ENCODE measurements at regions of chr12 and their contacts with region 1.

Region 1: GRCh38 chr12:26274441-26275312 is 79.3 kb downstream of the SSPN start:
- DNase-seq: peak; percentile 100
- ATAC-seq: peak; percentile 95
- H3K4me3 ChIP-seq: peak overlapping the region in 1 of 2 experiments; percentile 11; a peak in 2 of 4 replicates
- H3K27ac ChIP-seq: peak overlapping the region; percentile 98
- H3K4me1 ChIP-seq: peaks cover 61% of the 10 kb centered on the region
- H3K27me3 ChIP-seq: no peaks in the 10 kb centered on the region
- CTCF ChIP-seq: no peak; the same call in 1 of the 2 replicates

Region 2: DNA sequence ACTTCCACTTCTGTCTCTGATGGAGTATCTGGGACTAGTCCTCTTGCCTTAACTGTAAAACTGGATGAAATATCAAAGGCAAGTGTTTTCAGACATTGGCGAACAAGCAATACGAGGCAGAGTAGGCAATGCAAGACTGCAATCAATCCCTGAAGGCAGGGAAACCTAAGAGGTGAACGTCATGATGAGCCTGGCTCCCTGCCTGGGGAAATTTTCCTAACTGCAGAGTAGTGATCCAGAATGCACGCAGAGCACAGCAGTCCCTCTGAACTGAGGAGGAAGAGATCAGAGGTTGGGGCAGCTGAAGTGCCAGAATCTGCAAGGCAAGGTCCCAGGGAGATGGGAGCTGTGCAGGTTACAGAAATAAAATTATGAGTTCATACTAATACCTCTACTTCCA is 168.3 kb before region 1 on chr12:
- CTCF ChIA-PET with region 1: no interaction called
- POLR2A ChIA-PET with region 1: interaction called, 13 read pairs
- in situ Hi-C with region 1: no loop called
- intact Hi-C with region 1: no loop called
- DNase-seq: no peak
- ATAC-seq: peak; percentile 66
- H3K4me3 ChIP-seq: no peak overlapping the region
- H3K27ac ChIP-seq: peak overlapping the region; percentile 100
- H3K4me1 ChIP-seq: peaks cover 38% of the 10 kb centered on the region
- H3K27me3 ChIP-seq: no peaks in the 10 kb centered on the region
- CTCF ChIP-seq: no peak

Region 3: DNA sequence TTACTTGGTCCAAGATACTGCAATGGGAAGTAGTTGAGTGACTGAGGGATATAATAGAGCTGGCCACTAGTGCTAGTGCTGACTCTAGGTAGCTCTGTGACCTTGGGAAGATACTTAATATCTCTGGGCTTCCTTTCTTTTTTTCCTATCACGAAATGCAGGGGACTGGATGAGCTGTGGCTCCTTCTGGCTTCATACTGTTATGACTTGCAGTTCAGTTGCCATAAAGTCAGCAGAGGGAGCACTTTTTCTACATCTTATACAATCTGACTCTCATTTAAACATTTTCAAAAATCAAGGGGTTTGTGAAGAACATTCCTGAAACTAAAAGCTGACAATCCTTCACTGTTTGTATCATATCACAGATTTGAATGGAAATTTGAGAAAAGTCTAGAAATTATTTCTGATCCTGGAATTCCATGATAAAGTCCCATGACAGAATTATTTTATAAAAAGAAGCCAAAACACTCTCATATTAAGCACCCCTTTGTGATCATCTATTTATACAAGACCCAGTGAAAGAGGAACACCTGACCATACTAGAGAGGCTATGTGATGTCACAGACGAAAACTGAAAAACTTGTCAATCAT is 155.2 kb before region 1 on chr12:
- CTCF ChIA-PET with region 1: interaction called, 19 read pairs
- POLR2A ChIA-PET with region 1: interaction called, 17 read pairs
- in situ Hi-C with region 1: no loop called
- intact Hi-C with region 1: no loop called
- DNase-seq: no peak
- ATAC-seq: peak; percentile 36
- H3K4me3 ChIP-seq: no peak overlapping the region
- H3K27ac ChIP-seq: peak overlapping the region; percentile 100
- H3K4me1 ChIP-seq: peaks cover 77% of the 10 kb centered on the region
- H3K27me3 ChIP-seq: no peaks in the 10 kb centered on the region
- CTCF ChIP-seq: peak; percentile 89

Region 4: GRCh38 chr12:26125400-26126339 is 149.0 kb before region 1 on chr12:
- CTCF ChIA-PET with region 1: interaction called, 12 read pairs
- POLR2A ChIA-PET with region 1: interaction called, 17 read pairs
- in situ Hi-C with region 1: no loop called
- intact Hi-C with region 1: loop called (anchors 1 kb)
- DNase-seq: peak; percentile 94
- ATAC-seq: peak; percentile 80
- H3K4me3 ChIP-seq: peak overlapping the region; percentile 68 to 90
- H3K27ac ChIP-seq: peak overlapping the region; percentile 100
- H3K4me1 ChIP-seq: peaks cover 39% of the 10 kb centered on the region
- H3K27me3 ChIP-seq: peaks cover 5% of the 10 kb centered on the region; the same call in 1 of the 2 replicates
- CTCF ChIP-seq: no peak

Region 5: DNA sequence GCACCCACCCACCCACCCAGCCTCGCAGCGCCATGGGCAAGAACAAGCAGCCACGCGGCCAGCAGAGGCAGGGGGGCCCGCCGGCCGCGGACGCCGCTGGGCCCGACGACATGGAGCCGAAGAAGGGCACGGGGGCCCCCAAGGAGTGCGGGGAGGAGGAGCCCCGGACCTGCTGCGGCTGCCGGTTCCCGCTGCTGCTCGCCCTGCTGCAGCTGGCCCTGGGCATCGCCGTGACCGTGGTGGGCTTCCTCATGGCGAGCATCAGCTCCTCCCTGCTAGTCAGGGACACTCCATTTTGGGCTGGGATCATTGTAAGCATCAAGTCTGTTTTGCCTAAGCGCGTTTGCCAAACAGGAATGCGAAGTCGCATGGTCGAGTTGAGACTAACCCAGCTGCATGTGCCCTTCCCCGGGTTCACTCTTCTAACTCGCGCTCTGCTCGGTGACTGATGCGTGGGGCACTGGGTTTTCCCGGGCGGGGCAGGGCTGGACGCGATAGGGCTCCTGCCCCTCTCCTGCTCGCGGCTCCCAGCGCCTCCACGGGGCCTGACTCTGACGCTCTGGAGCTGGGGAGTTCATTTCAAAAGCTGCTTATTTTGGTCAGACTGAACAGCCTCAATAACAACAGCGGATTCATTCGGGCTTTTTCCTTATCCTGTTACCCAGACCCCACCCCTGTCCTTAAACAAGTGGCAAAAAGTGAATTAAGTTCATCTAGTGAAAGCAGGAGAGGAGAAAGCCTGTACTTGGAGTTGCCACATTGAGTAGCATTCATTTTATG is 78.8 kb before region 1 on chr12:
- CTCF ChIA-PET with region 1: no interaction called
- POLR2A ChIA-PET with region 1: interaction called, 4 read pairs
- in situ Hi-C with region 1: no loop called
- intact Hi-C with region 1: loop called (anchors 5 kb)
- DNase-seq: peak; percentile 62
- ATAC-seq: peak; percentile 87
- H3K4me3 ChIP-seq: peak overlapping the region; percentile 52 to 74
- H3K27ac ChIP-seq: peak overlapping the region; percentile 98
- H3K4me1 ChIP-seq: peaks cover 41% of the 10 kb centered on the region
- H3K27me3 ChIP-seq: no peaks in the 10 kb centered on the region
- CTCF ChIP-seq: no peak

Region 6: GRCh38 chr12:26455936-26456574 is 181.4 kb after region 1 on chr12:
- CTCF ChIA-PET with region 1: interaction called, 12 read pairs
- POLR2A ChIA-PET with region 1: no interaction called
- in situ Hi-C with region 1: no loop called
- intact Hi-C with region 1: no loop called
- DNase-seq: no peak
- ATAC-seq: no peak
- H3K4me3 ChIP-seq: no peak overlapping the region
- H3K27ac ChIP-seq: no peak overlapping the region
- H3K4me1 ChIP-seq: no peaks in the 10 kb centered on the region
- H3K27me3 ChIP-seq: no peaks in the 10 kb centered on the region
- CTCF ChIP-seq: no peak

Region 7: GRCh38 chr12:26661399-26661798 is 386.7 kb after region 1 on chr12:
- CTCF ChIA-PET with region 1: no interaction called
- POLR2A ChIA-PET with region 1: interaction called, 11 read pairs
- in situ Hi-C with region 1: no loop called
- intact Hi-C with region 1: no loop called
- DNase-seq: no peak
- ATAC-seq: peak; percentile 51; the same call in 1 of the 2 replicates
- H3K4me3 ChIP-seq: no peak overlapping the region
- H3K27ac ChIP-seq: no peak overlapping the region
- H3K4me1 ChIP-seq: no peaks in the 10 kb centered on the region; the same call in 1 of the 2 replicates
- H3K27me3 ChIP-seq: no peaks in the 10 kb centered on the region
- CTCF ChIP-seq: no peak